Sigmoid colon (tissue), 7 donors: ENCODE measurements at regions of chrX and their contacts with region 1.

Region 1: DNA sequence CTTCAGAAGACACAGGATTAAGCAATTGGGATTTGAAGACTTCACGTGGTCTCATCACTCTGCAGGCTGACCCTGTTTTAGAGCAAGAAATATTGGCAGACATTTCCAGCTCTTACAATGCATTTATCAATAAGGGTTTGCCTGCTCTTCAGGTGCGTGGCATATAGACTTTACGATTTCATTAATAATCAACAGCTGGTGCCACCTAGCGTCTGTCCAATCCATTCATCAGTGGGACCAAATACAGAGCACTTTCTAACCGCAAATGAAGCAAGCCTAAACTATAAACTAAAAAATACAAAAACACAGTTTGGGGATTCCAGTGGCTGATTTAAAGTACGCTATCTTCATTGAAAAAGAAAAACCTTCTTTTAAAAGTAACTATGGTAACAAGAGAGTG is 125.4 kb upstream of the DMD start:
- DNase-seq: no peak
- H3K4me3 ChIP-seq: no peak overlapping the region
- H3K27ac ChIP-seq: no peak overlapping the region
- H3K4me1 ChIP-seq: peaks cover 0 to 7% (median 0%) of the 10 kb centered on the region in 4 donors
- H3K27me3 ChIP-seq: no peaks in the 10 kb centered on the region
- CTCF ChIP-seq: peak in 3 of 4 experiments; percentile 18 to 32 (median 24)
- EP300 ChIP-seq: no peak
- POLR2A ChIP-seq: no peak

Region 2: GRCh38 chrX:32530802-32531403 is 805.9 kb before region 1 on chrX:
- intact Hi-C with region 1: loop called (anchors 5 kb)
- DNase-seq: no peak
- H3K4me3 ChIP-seq: peak overlapping the region in 1 of 4 donors; percentile 30
- H3K27ac ChIP-seq: no peak overlapping the region
- H3K4me1 ChIP-seq: no peaks in the 10 kb centered on the region
- H3K27me3 ChIP-seq: no peaks in the 10 kb centered on the region
- CTCF ChIP-seq: peak in 3 of 4 experiments; percentile 17 to 40 (median 20)
- EP300 ChIP-seq: no peak
- POLR2A ChIP-seq: no peak

Region 3: DNA sequence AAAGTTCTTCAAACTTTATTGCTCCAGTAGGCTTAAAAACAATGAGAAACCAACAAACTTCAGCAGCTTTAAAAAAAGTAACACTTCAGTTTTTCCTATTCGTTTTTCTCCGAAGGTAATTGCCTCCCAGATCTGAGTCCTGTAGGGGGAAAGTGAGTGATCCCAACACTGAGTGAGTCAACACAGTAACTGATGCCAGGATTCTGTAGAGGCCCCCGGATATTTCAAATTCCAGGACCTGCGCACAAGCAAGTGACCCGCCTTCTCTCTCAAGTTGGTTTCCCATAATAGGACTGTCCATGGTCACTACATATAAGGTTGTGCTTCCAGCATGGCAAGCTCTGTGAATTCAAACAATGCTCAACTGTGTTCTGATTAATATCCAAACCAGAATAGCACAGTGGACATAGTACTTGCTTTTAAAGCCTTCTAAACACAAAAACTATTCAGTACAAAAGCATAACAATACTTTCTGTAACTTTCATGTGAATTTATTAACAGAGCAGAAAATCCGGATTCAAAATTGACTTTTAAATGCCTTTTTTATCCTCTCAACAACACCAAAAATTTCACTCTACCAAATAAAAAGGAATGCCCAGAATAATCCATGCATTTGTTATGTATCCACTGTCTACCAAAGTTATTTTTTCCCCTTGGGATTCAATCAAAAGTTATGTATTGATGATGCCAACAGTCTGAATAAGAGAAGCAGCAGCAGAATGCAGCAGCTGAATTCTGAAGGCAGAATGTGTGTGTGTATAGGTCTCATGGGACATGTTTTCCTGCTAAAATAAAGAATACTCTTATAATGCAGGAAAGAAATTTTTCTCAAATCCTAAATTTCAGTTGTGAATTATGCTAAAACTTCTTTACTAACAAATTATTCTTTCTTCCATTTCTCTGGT is 125.2 kb before region 1 on chrX and contains the start of gene DMD:
- intact Hi-C with region 1: loop called (anchors 10 kb)
- DNase-seq: peak; percentile 87
- H3K4me3 ChIP-seq: peak within 1 kb of the TSS; percentile 28 to 50 (median 43)
- H3K27ac ChIP-seq: peak within 1 kb of the TSS; percentile 70 to 82 (median 78)
- H3K4me1 ChIP-seq: peaks cover 0 to 13% (median 3%) of the 10 kb centered on the region in 4 donors
- H3K27me3 ChIP-seq: no peaks in the 10 kb centered on the region
- CTCF ChIP-seq: no peak
- EP300 ChIP-seq: peak in 2 of 4 donors; percentile 32 to 59
- POLR2A ChIP-seq: peak in 1 of 2 donors; percentile 44
- total RNA-seq, gene DMD: 183 to 260 (median 216) TPM

Region 4: GRCh38 chrX:33285550-33285949 is 51.2 kb before region 1 on chrX:
- intact Hi-C with region 1: no loop called
- DNase-seq: no peak
- H3K4me3 ChIP-seq: no peak overlapping the region
- H3K27ac ChIP-seq: no peak overlapping the region
- H3K4me1 ChIP-seq: no peaks in the 10 kb centered on the region
- H3K27me3 ChIP-seq: no peaks in the 10 kb centered on the region
- CTCF ChIP-seq: no peak
- EP300 ChIP-seq: no peak
- POLR2A ChIP-seq: no peak